ENCODE measurements at regions of chr11 and their contacts with region 1.

Region 1: DNA sequence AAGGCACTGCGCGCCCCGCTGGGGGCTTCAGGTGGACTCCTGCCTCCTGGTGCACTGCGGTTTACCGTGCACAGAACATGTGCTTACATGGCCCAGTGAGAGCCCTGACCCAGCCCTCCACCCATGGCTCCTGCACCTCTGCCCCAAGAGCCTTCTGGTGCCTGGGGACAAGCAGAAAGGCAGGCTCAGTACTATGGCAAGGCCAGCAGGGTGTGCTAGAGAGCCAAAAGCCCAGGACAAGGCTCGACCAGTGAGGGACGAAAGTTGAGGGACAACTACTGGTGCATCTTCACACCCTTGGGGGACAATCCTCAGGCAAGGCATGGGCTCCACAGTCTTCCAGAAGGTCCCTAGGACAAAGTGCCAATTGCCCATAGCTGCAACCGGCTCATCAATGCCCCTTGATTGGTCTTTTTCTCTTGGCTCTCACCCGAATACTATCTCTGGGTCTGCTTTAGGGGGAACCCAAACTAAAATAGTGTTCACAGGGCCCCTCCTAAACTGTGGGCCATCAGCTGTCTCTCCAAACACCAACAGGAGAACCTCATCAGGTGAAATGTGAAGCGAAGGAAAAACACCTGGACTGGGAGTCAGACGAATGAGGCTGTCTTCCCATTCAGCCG is 13.5 kb downstream of the PGA5 start:
- DNase-seq: peak; percentile 91
- CTCF ChIP-seq: peak; percentile 98

Region 2: DNA sequence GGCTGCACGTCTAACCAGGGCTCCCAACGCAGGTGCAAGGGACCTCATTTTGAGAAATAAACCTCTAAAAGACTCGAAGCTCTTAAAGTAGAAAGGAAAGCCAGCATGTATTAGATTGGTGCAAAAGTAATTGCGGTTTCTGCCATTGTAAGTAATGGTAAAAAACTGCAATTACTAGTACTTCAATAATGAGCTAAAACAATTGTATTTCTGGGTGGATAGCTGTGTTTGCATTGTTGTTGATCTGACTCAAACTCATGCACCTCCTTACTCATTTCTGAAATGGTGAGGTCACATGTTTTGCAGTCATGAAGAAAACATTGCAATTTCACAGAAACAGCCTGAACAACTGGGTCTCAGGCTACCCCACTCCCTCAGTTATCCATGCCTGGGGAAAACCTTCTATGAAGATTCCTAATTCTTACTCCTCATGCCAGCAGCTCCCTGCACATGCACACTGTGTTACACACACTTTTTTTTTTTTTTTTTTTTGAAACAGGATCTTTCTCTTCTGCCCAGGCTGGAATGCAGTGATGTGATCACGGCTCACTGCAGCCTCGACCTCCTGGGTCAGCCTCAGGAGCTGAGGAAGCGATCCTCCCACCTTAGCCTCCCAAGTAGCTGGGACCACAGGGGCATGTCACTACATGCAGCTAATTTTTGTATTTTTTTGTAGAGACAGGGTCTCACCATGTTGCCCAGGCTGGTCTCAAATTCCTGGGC is 16.0 kb after region 1 on chr11:
- CTCF ChIA-PET with region 1: interaction called, 39 read pairs
- POLR2A ChIA-PET with region 1: no interaction called
- DNase-seq: peak; percentile 58
- CTCF ChIP-seq: no peak

Region 3: GRCh38 chr11:61293867-61294716 is 39.6 kb after region 1 on chr11:
- CTCF ChIA-PET with region 1: interaction called, 14 read pairs
- POLR2A ChIA-PET with region 1: no interaction called
- DNase-seq: peak; percentile 72
- CTCF ChIP-seq: no peak

Measured in GM10248 (cell line).